Calu3 (cell line): ENCODE measurements at regions of chr2 and their contacts with region 1.

Region 1: DNA sequence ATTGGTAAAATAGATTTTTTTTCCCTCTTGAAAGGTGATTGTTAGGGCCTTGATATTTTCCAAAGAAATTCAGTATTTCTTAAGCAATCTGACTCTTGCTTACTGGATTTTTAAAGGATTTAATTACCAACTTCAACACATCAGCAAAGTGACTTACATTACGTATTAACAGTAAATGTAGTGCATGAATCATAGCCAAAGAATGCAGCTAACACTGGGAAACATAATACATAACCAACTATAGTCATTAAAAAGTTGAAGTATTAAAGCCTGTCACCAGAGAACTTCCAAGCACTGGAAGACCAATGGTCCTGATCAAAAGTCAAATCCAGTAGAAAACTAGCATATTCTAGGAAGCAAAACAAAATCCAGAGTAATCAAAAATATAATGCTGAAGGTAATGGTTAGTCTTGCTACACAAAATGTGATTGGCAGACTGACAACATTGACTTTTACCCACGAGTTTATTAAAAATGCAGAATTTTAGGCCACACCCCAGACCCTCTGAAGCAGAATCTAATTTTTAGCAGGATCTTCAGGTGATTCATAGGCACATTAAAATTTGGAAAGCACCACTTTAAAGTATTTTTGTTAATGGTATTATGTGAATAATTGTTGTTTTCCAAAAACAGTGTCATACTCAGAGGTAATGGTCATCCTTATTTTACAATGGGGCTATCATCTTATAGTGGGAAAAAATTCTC is 31.8 kb upstream of the CAVIN2 start:
- DNase-seq: no peak
- H3K4me3 Mint-ChIP-seq: peak overlapping the region; percentile 24
- H3K27ac Mint-ChIP-seq: peak overlapping the region; percentile 85
- H3K4me1 Mint-ChIP-seq: peaks cover 39% of the 10 kb centered on the region
- H3K27me3 Mint-ChIP-seq: no peaks in the 10 kb centered on the region
- CTCF ChIP-seq: no peak

Region 2: GRCh38 chr2:191797960-191798876 is 80.5 kb before region 1 on chr2:
- CTCF ChIA-PET with region 1: no interaction called
- intact Hi-C with region 1: no loop called
- DNase-seq: no peak
- H3K4me3 Mint-ChIP-seq: no peak overlapping the region
- H3K27ac Mint-ChIP-seq: no peak overlapping the region
- H3K4me1 Mint-ChIP-seq: no peaks in the 10 kb centered on the region
- H3K27me3 Mint-ChIP-seq: no peaks in the 10 kb centered on the region
- CTCF ChIP-seq: no peak

Region 3: GRCh38 chr2:191927319-191927867 is 48.7 kb after region 1 on chr2:
- CTCF ChIA-PET with region 1: no interaction called
- intact Hi-C with region 1: loop called (anchors 5 kb)
- DNase-seq: peak; percentile 85
- H3K4me3 Mint-ChIP-seq: peak overlapping the region; percentile 56
- H3K27ac Mint-ChIP-seq: peak overlapping the region; percentile 60
- H3K4me1 Mint-ChIP-seq: peaks cover 26% of the 10 kb centered on the region
- H3K27me3 Mint-ChIP-seq: no peaks in the 10 kb centered on the region
- CTCF ChIP-seq: no peak

Region 4: DNA sequence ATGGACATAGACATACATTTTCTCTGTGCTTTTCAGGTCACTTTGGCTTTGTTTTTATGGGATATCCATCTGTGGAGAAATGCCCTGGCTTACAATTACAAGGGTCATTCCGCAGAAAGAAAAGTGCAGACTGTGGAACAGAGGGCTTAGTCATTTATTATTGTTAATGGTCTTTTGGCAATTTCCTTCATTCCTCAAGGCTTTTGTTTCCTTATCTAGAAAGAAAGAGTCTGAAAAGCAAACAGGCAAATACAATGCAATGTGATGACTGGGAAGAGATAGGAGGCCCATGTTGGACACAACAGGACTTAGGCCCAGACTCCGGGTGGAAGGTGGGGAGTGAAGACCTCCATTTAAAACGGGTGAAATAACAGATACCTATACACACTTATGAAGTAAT is 97.7 kb after region 1 on chr2:
- CTCF ChIA-PET with region 1: no interaction called
- intact Hi-C with region 1: loop called (anchors 5 kb)
- DNase-seq: peak; percentile 2
- H3K4me3 Mint-ChIP-seq: no peak overlapping the region
- H3K27ac Mint-ChIP-seq: no peak overlapping the region
- H3K4me1 Mint-ChIP-seq: peaks cover 22% of the 10 kb centered on the region
- H3K27me3 Mint-ChIP-seq: no peaks in the 10 kb centered on the region
- CTCF ChIP-seq: no peak